PC-9 (cell line): ENCODE measurements at regions of chr22 and their contacts with region 1.

Region 1: DNA sequence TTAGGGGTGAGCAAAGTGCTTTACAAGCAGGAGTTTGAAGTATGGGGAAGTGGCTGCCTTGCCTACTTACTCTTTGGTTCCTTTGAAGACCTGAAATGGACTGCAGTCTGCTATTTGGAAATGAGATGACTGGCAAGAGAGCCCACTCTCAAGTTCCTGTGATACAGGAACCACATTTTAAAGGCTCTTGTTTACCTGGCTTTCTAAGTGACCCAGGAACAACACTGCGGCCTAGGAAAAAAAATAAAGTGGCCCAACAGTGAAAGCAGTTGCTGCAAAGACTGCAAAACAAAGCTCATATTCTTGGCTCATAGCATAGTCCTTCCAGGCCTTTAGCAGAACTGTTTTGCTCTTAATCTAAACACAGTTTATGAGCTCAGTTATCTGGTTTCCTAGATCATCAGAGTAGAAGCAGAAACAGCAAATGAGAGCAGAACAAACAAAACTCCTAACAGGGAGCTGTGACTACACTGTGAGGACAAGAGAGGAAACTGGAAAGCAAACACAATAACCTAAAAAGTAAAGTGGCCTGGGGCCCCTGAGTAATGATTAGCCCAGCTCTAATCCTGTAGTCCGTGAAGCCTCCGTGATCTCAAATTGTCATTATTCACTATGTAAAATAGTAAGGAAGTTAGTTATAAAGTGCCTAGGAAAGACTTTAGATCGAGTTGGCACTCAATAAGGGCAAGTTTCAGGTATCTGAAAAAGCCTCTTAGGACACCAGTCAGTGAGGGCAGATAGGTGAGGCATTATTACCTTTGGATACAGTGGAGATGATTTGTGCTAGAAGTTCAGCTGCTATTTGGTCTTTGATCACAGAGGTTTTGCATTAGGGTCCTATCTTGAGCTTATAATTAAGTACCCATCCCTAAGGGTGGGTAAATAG is 11.5 kb downstream of the CCDC117 start:
- DNase-seq: no peak
- H3K4me3 ChIP-seq: no peak overlapping the region
- H3K27ac ChIP-seq: no peak overlapping the region
- H3K4me1 ChIP-seq: no peaks in the 10 kb centered on the region
- H3K27me3 ChIP-seq: no peaks in the 10 kb centered on the region
- CTCF ChIP-seq: no peak

Region 2: GRCh38 chr22:28808716-28809355 is 24.8 kb after region 1 on chr22:
- CTCF ChIA-PET with region 1: no interaction called
- POLR2A ChIA-PET with region 1: interaction called, 12 read pairs
- intact Hi-C with region 1: no loop called
- DNase-seq: no peak
- H3K4me3 ChIP-seq: no peak overlapping the region
- H3K27ac ChIP-seq: no peak overlapping the region
- H3K4me1 ChIP-seq: peaks cover 4% of the 10 kb centered on the region; the same call in 1 of the 2 replicates
- H3K27me3 ChIP-seq: no peaks in the 10 kb centered on the region
- CTCF ChIP-seq: no peak